Sciatic nerve (tissue), 2 donors: ENCODE measurements at regions of chr7 and their contacts with region 1.

Region 1: DNA sequence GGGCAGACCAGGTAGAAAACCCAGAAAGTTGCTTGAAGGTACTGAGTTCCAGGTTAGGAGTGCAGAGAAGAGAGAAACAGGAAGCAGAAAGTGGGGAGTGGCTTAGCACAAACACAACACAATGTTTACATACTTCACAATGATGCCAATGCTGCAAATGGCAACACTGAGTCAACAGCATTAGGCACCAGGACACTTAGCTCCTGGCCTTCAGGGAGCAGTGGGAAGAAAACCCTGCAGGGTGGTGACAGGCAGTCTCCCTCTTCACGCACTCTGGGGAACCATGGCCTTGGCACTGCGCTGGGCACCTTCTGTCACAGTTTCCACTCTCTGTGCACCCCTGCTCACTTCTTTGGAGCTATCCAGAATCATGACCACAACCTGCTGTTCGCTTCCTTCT is 7.3 kb downstream of the ICA1 start:
- DNase-seq: no peak
- ATAC-seq: no peak

Region 2: GRCh38 chr7:9091282-9091681 is 836.6 kb after region 1 on chr7:
- intact Hi-C with region 1: loop called (anchors 5 kb)
- DNase-seq: no peak
- ATAC-seq: no peak